K562 (cell line): ENCODE measurements at regions of chr7 and their contacts with region 1.

Region 1: GRCh38 chr7:134605973-134606923 is 40.4 kb upstream of the BPGM start:
- DNase-seq: peak; percentile 73 to 87 (median 81)
- ATAC-seq: peak; percentile 98
- H3K4me3 ChIP-seq: no peak overlapping the region
- H3K27ac ChIP-seq: no peak overlapping the region
- H3K4me1 ChIP-seq: no peaks in the 10 kb centered on the region
- H3K27me3 ChIP-seq: peaks cover 9 to 21% of the 10 kb centered on the region in 2 experiments
- CTCF ChIP-seq: peak; percentile 90 to 97 (median 95)
- EP300 ChIP-seq: no peak
- POLR2A ChIP-seq: no peak
- RAD21 ChIP-seq: peak; percentile 83 to 85

Region 2: DNA sequence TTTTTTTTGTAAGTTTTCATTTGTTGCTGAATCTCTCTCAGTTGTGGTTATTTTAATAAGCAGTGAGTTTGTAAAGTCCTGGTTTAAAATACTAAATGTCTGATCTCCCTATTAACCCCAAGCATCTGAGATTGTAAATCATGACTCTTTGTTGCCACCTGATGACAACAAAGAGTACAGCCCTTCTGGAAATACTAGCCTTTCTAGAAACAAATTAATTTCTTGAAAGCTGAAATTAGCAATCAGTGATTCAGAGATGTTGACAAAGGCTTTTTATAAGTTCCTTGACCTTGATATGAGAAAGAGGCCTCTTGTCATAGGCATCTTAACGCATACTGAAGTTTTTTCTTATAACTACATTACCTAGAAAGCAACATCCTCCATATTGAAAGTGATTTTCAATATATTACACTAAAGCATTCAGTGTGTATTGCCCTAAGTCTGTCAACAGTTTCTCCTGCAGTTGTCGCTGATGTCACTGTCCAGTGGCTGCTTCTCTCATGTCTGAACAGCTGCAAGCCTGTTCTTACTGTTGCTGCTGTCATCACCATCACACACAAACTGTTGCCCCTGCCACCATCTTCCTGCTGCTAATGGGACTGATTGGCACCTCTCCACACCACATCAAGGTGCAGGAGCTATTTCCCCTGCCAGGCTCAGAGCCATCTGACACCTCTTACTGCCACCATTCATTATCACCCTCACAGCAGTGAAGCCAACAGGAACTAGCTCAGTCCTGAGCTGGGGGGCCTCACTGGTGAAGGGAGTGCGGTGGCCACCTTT is 574.2 kb before region 1 on chr7:
- CTCF ChIA-PET with region 1: no interaction called
- POLR2A ChIA-PET with region 1: no interaction called
- in situ Hi-C with region 1: no loop called
- intact Hi-C with region 1: no loop called
- DNase-seq: no peak
- ATAC-seq: no peak
- H3K4me3 ChIP-seq: no peak overlapping the region
- H3K27ac ChIP-seq: no peak overlapping the region
- H3K4me1 ChIP-seq: no peaks in the 10 kb centered on the region
- H3K27me3 ChIP-seq: no peaks in the 10 kb centered on the region
- CTCF ChIP-seq: peak in 1 of 3 experiments; percentile 26; a peak in 2 of 6 replicates
- EP300 ChIP-seq: no peak
- POLR2A ChIP-seq: no peak
- RAD21 ChIP-seq: no peak

Region 3: GRCh38 chr7:134108813-134109212 is 497.4 kb before region 1 on chr7:
- CTCF ChIA-PET with region 1: no interaction called
- POLR2A ChIA-PET with region 1: no interaction called
- in situ Hi-C with region 1: no loop called
- intact Hi-C with region 1: no loop called
- DNase-seq: peak in 1 of 4 experiments; percentile 34
- ATAC-seq: peak; percentile 75
- H3K4me3 ChIP-seq: no peak overlapping the region
- H3K27ac ChIP-seq: no peak overlapping the region
- H3K4me1 ChIP-seq: no peaks in the 10 kb centered on the region
- H3K27me3 ChIP-seq: peaks cover 0 to 4% of the 10 kb centered on the region in 2 experiments; a peak in 1 of 5 replicates
- CTCF ChIP-seq: peak; percentile 33 to 69 (median 52); a peak in 4 of 6 replicates
- EP300 ChIP-seq: no peak
- POLR2A ChIP-seq: no peak
- RAD21 ChIP-seq: peak; percentile 52 to 72; a peak in 3 of 4 replicates

Region 4: DNA sequence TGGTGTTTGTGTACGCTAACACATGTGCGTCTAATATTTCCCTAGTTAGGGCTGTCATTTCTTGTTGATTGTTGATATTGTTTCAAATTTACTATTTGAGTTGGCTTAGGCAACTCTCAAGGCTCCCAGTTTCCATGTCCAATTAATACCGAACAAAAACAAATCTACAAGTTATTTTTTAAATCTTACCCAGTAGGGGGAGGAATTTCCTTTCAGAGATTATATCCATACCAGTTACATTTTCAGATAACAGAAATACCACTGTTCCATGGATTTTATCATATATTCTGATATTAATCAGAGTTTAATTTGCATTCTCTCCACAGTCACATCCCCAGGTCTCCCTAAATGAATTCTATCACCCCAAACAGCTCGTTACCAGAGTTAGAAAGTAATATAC is 86.1 kb before region 1 on chr7:
- CTCF ChIA-PET with region 1: interaction called, 17 read pairs
- POLR2A ChIA-PET with region 1: no interaction called
- in situ Hi-C with region 1: no loop called
- intact Hi-C with region 1: no loop called
- DNase-seq: no peak
- ATAC-seq: no peak
- H3K4me3 ChIP-seq: no peak overlapping the region
- H3K27ac ChIP-seq: no peak overlapping the region
- H3K4me1 ChIP-seq: no peaks in the 10 kb centered on the region
- H3K27me3 ChIP-seq: peaks cover 11 to 13% of the 10 kb centered on the region in 2 experiments; a peak in 4 of 5 replicates
- CTCF ChIP-seq: peak in 1 of 3 experiments; percentile 37; a peak in 2 of 6 replicates
- EP300 ChIP-seq: no peak
- POLR2A ChIP-seq: no peak
- RAD21 ChIP-seq: no peak

Region 5: GRCh38 chr7:134547397-134548054 is 58.7 kb before region 1 on chr7:
- CTCF ChIA-PET with region 1: interaction called, 10 read pairs
- POLR2A ChIA-PET with region 1: no interaction called
- in situ Hi-C with region 1: no loop called
- intact Hi-C with region 1: loop called (anchors 2 kb)
- DNase-seq: peak; percentile 77 to 84 (median 80)
- ATAC-seq: peak; percentile 98
- H3K4me3 ChIP-seq: no peak overlapping the region
- H3K27ac ChIP-seq: no peak overlapping the region
- H3K4me1 ChIP-seq: 0 out of 5 replicates have a peak, but pooled peaks cover 0 to 2% of the 10 kb centered on the region in 2 experiments
- H3K27me3 ChIP-seq: peaks cover 34 to 44% of the 10 kb centered on the region in 2 experiments
- CTCF ChIP-seq: peak; percentile 82 to 98 (median 93)
- EP300 ChIP-seq: no peak
- POLR2A ChIP-seq: no peak
- RAD21 ChIP-seq: peak; percentile 35 to 60; a peak in 3 of 4 replicates

Region 6: GRCh38 chr7:134553976-134554375 is 52.3 kb before region 1 on chr7:
- CTCF ChIA-PET with region 1: interaction called, 3 read pairs
- POLR2A ChIA-PET with region 1: no interaction called
- in situ Hi-C with region 1: no loop called
- intact Hi-C with region 1: loop called (anchors 2 kb)
- DNase-seq: peak in 1 of 4 experiments; percentile 29
- ATAC-seq: peak; percentile 59
- H3K4me3 ChIP-seq: no peak overlapping the region
- H3K27ac ChIP-seq: no peak overlapping the region
- H3K4me1 ChIP-seq: no peaks in the 10 kb centered on the region
- H3K27me3 ChIP-seq: peaks cover 64 to 72% of the 10 kb centered on the region in 2 experiments
- CTCF ChIP-seq: peak; percentile 41 to 58 (median 50); a peak in 4 of 6 replicates
- EP300 ChIP-seq: no peak
- POLR2A ChIP-seq: no peak
- RAD21 ChIP-seq: peak in 1 of 2 experiments; percentile 36; a peak in 1 of 4 replicates

Region 7: DNA sequence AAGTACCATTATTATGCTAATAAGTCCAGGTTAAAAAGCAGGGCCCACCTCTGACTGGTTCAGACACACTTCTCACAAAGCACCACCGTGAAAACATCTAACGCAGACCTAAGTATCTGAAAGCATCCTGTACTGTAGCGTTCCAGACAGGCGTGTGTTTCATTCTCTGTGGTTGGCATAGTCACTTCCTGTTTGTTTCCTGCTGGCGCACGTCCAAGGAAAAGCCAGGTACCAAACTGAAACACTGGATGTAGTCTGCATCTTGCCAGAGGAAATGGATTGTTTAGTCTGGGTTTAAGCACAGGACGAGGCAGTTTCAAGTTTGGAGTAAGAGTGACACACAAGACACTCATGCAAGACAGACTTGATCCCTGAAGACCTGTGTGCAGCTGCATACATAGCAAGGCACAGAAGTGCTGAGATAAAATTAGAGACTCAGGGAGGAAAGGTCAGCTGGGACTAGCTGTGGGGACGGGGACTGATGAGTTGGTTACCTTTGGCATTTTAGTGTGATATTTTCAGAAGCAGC is 63.7 kb after region 1 on chr7:
- CTCF ChIA-PET with region 1: no interaction called
- POLR2A ChIA-PET with region 1: no interaction called
- in situ Hi-C with region 1: no loop called
- intact Hi-C with region 1: no loop called
- DNase-seq: peak in 1 of 4 experiments; percentile 50
- ATAC-seq: peak; percentile 87
- H3K4me3 ChIP-seq: no peak overlapping the region
- H3K27ac ChIP-seq: no peak overlapping the region
- H3K4me1 ChIP-seq: peaks cover 0 to 7% of the 10 kb centered on the region in 2 experiments; a peak in 4 of 5 replicates
- H3K27me3 ChIP-seq: no peaks in the 10 kb centered on the region
- CTCF ChIP-seq: no peak
- EP300 ChIP-seq: no peak
- POLR2A ChIP-seq: no peak
- RAD21 ChIP-seq: no peak; a peak in 1 of 4 replicates